Activated CD4-positive, alpha-beta T cell treated with anti-CD3 and anti-CD28 coated beads, Interleukin-2, amount 10 ng/mL, durations not matched to agents 7 days and 5 days (primary cell): ENCODE measurements at regions of chr3 and their contacts with region 1.

Region 1: DNA sequence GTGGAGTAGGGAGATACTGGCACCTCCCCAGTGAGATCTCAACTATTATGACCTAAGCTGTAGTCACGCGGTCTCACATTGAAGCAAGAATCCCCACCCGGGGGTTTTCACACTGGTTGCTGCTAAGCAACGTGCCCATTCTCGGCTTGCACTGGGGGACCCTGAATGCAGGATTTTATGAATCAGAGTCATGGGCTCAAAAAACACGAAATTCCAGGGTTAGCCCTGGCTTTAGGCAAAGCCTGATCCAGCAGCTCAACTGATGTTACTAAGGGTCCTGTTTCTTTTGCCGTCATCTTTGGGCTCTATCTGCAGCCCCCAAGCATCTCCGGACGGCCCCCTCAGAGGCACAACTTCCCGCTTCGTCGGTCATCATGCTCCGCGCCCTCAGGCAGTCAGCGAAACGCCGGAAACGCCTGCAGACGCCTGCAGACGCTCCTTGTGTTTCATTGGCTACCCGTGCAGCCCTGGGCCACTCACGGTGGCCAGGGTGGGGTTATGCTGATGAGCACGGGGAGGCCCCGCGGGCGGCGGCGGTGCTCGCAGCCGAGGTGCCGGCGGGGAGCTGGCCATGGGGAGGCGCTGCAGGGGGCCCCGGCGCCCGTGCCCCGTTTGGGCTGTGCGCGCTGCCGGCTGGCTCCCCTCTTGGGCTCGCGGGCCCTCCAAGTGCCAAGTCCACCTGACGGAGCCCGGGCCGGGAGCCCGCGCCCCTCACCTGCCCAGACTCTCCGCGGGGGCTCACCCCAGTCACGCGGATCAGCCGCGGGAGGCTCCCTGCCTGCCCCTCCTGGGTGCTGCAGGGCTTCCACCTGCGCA is 25.8 kb downstream of the EFCC1 start:
- DNase-seq: peak; percentile 95
- H3K4me3 Mint-ChIP-seq: peak overlapping the region; percentile 75
- H3K27ac Mint-ChIP-seq: peak overlapping the region; percentile 94
- H3K4me1 Mint-ChIP-seq: peaks cover 17% of the 10 kb centered on the region
- H3K27me3 Mint-ChIP-seq: no peaks in the 10 kb centered on the region

Region 2: DNA sequence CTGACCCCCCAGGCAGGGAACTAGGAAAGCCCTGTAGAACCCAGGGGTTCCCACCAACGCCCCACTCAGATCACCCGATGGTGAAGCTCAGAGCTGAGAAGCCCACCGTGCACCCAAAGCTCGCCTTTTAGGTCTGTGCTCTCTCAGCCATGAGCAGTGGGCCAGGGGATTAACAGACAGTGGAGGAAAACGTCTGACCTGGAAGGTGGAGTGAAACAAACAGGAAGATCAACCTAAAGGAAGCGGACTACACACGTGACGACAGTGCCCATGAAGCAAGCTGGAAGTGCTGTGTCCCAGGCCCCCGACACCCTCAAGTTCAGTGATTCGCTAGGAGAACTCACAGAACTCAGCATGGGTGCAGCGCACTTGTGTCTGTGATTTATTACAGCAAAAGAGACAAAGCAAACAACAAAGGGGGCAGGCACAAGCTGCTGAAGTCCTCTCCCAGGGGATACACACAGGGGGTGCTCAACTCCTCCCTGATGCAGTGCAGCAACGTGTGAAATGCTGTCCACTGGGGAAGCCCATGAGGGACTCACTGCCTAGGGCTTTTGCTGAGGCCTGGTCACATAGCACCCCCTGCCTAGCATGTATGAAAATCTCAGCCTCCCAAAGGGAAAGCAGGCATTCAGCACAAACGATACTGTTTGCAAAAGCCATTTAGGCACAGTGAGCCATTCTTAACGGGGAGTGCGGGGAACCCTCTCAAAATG is 76.6 kb before region 1 on chr3:
- CTCF ChIA-PET with region 1: no interaction called
- POLR2A ChIA-PET with region 1: no interaction called
- DNase-seq: peak; percentile 40
- H3K4me3 Mint-ChIP-seq: no peak overlapping the region
- H3K27ac Mint-ChIP-seq: no peak overlapping the region
- H3K4me1 Mint-ChIP-seq: no peaks in the 10 kb centered on the region
- H3K27me3 Mint-ChIP-seq: peaks cover 8% of the 10 kb centered on the region

Region 3: GRCh38 chr3:129016356-129016719 is 10.6 kb before region 1 on chr3:
- CTCF ChIA-PET with region 1: interaction called, 94 read pairs
- POLR2A ChIA-PET with region 1: interaction called, 4 read pairs
- DNase-seq: peak; percentile 69
- H3K4me3 Mint-ChIP-seq: peak overlapping the region; percentile 70
- H3K27ac Mint-ChIP-seq: peak overlapping the region; percentile 98
- H3K4me1 Mint-ChIP-seq: peaks cover 37% of the 10 kb centered on the region
- H3K27me3 Mint-ChIP-seq: no peaks in the 10 kb centered on the region

Region 4: DNA sequence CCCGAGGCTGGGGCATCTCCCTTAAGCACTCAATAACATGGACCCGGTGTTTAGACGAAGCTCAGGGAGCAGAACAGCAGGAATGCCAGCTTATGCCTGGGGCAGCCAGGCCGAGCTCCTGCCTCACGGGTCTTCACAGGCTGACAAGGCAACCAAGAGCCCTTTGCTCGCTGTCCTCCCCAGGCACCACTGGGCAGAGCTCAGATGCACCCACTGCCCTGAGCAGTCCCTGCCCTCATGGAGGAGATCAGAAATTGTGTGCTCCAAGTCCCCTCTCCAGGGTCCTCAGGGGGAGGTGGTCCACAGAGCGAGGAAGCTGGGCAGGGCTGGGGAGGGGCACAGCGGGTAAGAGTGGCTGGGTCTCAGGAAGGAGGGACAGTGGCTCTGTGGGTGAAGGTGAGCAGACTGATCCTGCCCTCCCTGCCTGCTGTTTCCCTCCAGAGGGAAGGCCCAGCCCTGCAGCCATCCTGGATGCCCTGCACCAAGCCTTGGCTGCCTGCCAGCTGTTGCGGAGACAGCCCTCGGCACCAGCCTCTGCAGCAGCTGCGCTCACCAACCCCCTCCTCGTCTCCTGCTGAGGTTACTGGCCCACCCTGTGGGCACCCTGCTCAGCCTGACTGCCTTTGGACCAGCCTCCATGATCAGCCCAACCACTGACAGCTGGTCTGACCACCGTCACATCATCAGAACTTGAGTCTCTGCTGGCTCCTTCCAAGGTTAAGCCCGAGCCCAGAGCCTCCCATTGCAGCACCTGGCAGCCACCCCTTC is 12.5 kb after region 1 on chr3:
- CTCF ChIA-PET with region 1: interaction called, 26 read pairs
- POLR2A ChIA-PET with region 1: interaction called, 4 read pairs
- DNase-seq: no peak
- H3K4me3 Mint-ChIP-seq: no peak overlapping the region
- H3K27ac Mint-ChIP-seq: no peak overlapping the region
- H3K4me1 Mint-ChIP-seq: peaks cover 17% of the 10 kb centered on the region
- H3K27me3 Mint-ChIP-seq: peaks cover 31% of the 10 kb centered on the region

Region 5: DNA sequence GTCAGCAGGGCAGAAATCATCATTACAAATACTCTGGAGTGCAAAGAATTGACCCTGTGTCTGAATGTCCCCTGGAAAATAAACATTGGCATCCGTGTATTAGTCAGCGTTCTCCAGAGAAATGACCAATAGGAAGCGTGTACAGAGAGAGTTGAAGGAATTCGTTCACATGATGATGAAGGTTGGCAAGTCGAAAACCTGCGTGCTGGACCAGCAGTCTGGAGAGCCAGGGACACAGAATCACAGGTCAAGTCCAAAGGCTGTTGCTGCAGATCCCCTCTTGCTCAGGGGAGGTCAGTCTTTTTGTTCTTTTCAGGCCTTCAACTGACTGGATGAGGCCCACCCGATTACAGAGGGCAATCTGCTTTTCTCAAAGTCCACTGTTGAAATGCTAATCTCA is 50.3 kb after region 1 on chr3:
- CTCF ChIA-PET with region 1: interaction called, 10 read pairs
- POLR2A ChIA-PET with region 1: no interaction called
- DNase-seq: no peak
- H3K4me3 Mint-ChIP-seq: no peak overlapping the region
- H3K27ac Mint-ChIP-seq: no peak overlapping the region
- H3K4me1 Mint-ChIP-seq: peaks cover 12% of the 10 kb centered on the region
- H3K27me3 Mint-ChIP-seq: peaks cover under 1% of the 10 kb centered on the region

Region 6: GRCh38 chr3:129271674-129272073 is 244.7 kb after region 1 on chr3:
- CTCF ChIA-PET with region 1: interaction called, 3 read pairs
- POLR2A ChIA-PET with region 1: interaction called, 14 read pairs
- DNase-seq: no peak
- H3K4me3 Mint-ChIP-seq: no peak overlapping the region
- H3K27ac Mint-ChIP-seq: no peak overlapping the region
- H3K4me1 Mint-ChIP-seq: peaks cover 9% of the 10 kb centered on the region
- H3K27me3 Mint-ChIP-seq: no peaks in the 10 kb centered on the region